ENCODE measurements at regions of chr11 and their contacts with region 1.

Region 1: GRCh38 chr11:64240394-64241174 is at the start of gene FKBP2:
- DNase-seq: peak; percentile 97 to 99 (median 99)
- ATAC-seq: peak; percentile 69
- H3K4me3 ChIP-seq: peak within 1 kb of the TSS; percentile 86
- H3K4me1 ChIP-seq: peaks cover 50% of the 10 kb centered on the region
- CTCF ChIP-seq: no peak
- total RNA-seq, gene FKBP2: 67.5 to 91.0 (median 75.8) TPM

Region 2: GRCh38 chr11:64173616-64174355 is 66.8 kb before region 1 on chr11:
- intact Hi-C with region 1: no loop called
- DNase-seq: no peak
- ATAC-seq: no peak
- H3K4me3 ChIP-seq: no peak overlapping the region
- H3K4me1 ChIP-seq: no peaks in the 10 kb centered on the region
- CTCF ChIP-seq: no peak

Region 3: GRCh38 chr11:64185816-64186498 is 54.6 kb before region 1 on chr11 and contains the start of gene STIP1:
- intact Hi-C with region 1: loop called in 1 of 2 experiments (anchors 10 kb)
- DNase-seq: peak; percentile 97 to 99 (median 98)
- ATAC-seq: peak; percentile 86
- H3K4me3 ChIP-seq: peak within 1 kb of the TSS; percentile 91
- H3K4me1 ChIP-seq: peaks cover 32% of the 10 kb centered on the region
- CTCF ChIP-seq: peak; percentile 23
- total RNA-seq, gene STIP1: 49.4 to 118 (median 80.3) TPM